GM18951 (cell line): ENCODE measurements at regions of chr4 and their contacts with region 1.

Region 1: GRCh38 chr4:21790438-21791029 is 158.0 kb downstream of the KCNIP4 start:
- POLR2A ChIP-seq: no peak

Region 2: GRCh38 chr4:22389240-22389870 is 598.8 kb after region 1 on chr4:
- in situ Hi-C with region 1: loop called (anchors 25 kb)
- POLR2A ChIP-seq: no peak

Region 3: GRCh38 chr4:22678940-22679854 is 888.7 kb after region 1 on chr4:
- in situ Hi-C with region 1: loop called (anchors 25 kb)
- POLR2A ChIP-seq: no peak